Transverse colon (tissue), 4 donors: ENCODE measurements at regions of chr2 and their contacts with region 1.

Region 1: DNA sequence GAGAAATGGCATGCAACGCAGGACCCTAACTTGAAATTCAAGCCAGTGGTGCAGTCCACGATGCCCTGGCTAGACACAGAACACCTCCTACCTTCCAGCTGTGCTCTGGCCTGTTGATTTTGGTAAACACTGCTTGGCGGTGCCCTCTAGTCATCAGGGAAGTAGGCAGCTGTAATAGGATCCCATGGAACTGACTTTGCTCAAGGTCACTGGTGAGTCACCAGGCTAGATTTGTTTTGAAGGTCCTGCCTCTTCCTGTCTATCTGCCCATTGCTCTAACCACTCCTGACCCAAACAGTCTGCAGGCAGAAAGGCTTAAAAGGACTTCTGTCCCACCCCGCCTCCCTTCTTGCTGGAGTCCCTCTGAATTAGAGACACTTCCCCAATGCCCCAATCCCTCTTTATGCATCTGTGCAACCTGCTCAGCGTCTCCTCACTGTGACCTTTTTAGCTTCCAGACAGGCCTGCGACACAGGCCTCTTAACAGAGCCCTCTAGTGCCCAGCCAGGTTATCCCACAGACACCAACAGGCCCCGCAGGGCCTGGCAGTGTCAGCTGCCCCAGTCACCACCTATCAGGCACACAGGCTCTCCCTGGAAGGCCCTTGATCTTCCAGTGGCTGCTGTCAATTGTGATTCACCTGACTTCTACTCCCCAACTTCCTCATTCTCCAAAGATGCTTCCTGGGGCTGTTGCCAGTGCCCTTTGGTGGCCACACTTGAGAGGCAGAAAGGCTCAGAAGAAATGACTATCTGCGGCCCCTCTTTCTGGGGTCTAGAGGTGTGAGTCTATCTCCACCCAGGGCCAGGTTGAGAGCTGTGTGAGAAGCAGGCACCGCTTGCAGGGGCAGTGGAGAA is 5.2 kb downstream of the TMEM127 start:
- DNase-seq: peak; percentile 74
- H3K4me3 ChIP-seq: peak overlapping the region in 1 of 4 donors; percentile 8
- H3K27ac ChIP-seq: peak overlapping the region; percentile 88 to 90 (median 88)
- H3K4me1 ChIP-seq: peaks cover 42 to 80% (median 59%) of the 10 kb centered on the region in 4 donors
- H3K27me3 ChIP-seq: no peaks in the 10 kb centered on the region
- CTCF ChIP-seq: peak in 3 of 5 experiments; percentile 26 to 49 (median 46)
- EP300 ChIP-seq: no peak
- POLR2A ChIP-seq: peak; percentile 58

Region 2: GRCh38 chr2:96208143-96209010 is 52.3 kb before region 1 on chr2 and contains the start of gene STARD7:
- in situ Hi-C with region 1: loop called in 1 of 4 experiments (anchors 5 kb)
- intact Hi-C with region 1: no loop called
- DNase-seq: peak; percentile 99
- H3K4me3 ChIP-seq: peak within 1 kb of the TSS; percentile 75 to 93 (median 84)
- H3K27ac ChIP-seq: peak within 1 kb of the TSS; percentile 97 to 98 (median 98)
- H3K4me1 ChIP-seq: peaks cover 35 to 51% (median 47%) of the 10 kb centered on the region in 4 donors
- H3K27me3 ChIP-seq: no peaks in the 10 kb centered on the region
- CTCF ChIP-seq: peak in 2 of 5 experiments; percentile 13 to 27
- EP300 ChIP-seq: no peak
- POLR2A ChIP-seq: peak; percentile 98
- total RNA-seq, gene STARD7: 74.1 to 155 (median 139) TPM